Transverse colon (tissue), 4 donors: ENCODE measurements at regions of chrX and their contacts with region 1.

Region 1: DNA sequence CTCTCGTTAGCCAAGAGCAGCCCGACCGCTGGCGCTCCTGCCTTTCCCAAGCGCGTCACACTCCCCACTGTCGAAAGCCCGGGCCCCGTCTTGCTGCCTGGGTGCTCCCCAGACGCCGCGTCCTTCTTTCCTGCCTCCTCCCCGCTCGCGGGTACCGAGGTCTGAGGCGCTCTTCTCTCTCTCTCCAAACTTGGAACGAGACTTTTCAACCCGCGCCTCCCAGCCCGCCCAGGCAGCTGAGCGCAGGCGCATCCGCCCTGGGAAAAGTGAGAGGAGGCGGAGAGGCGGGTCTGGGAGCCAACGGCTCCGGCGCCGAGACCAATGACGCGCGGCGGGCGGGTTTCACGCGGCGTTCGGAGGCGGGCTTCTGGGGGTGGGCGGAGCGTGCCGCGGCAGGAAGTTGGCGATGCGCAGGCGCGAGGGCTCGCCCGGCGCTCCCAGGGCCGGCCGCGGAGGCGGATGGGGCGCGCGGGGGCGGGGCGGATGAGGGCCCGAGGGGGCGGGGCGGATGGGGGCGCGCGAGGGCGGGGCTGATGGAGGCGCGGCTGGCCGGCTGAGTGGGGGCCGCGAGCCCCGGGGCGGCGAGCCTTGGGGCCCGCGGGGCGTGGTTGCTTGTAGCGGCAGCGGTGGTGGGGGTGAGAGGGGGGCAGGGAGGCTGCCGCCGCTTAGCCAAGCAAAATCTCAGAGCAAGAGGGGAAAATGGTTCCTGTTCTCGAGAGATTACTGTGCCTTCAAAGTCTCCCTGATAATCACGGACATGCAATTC is at the start of gene RBBP7:
- DNase-seq: peak; percentile 94
- H3K4me3 ChIP-seq: peak within 1 kb of the TSS; percentile 61 to 81 (median 70)
- H3K27ac ChIP-seq: peak within 1 kb of the TSS; percentile 93 to 97 (median 95)
- H3K4me1 ChIP-seq: peaks cover 10 to 31% (median 14%) of the 10 kb centered on the region in 4 donors
- H3K27me3 ChIP-seq: no peaks in the 10 kb centered on the region
- CTCF ChIP-seq: peak in 1 of 5 experiments; percentile 17
- EP300 ChIP-seq: no peak
- POLR2A ChIP-seq: peak; percentile 92
- total RNA-seq, gene RBBP7: 32.2 to 67.4 (median 55.2) TPM

Region 2: DNA sequence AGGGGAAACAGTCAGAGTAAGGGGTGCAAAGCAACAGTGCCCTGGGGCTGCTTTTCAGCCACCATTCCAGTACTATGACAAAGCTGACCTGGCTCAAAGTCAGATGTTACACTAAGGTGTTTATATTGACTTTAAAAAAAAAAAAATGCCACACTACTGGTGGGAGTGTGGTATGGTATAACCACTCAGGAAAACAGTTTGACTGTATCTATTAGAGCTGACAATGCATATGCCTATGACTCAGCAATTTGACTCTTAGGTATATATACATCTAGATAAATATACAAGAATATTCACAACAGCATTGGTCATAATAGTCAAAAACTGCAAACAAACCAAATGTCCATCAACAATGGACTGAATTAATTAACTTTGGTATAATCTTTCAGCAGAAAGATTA is 1615.4 kb before region 1 on chrX:
- in situ Hi-C with region 1: no loop called
- intact Hi-C with region 1: no loop called
- DNase-seq: no peak
- H3K4me3 ChIP-seq: no peak overlapping the region
- H3K27ac ChIP-seq: no peak overlapping the region
- H3K4me1 ChIP-seq: no peaks in the 10 kb centered on the region
- H3K27me3 ChIP-seq: no peaks in the 10 kb centered on the region
- CTCF ChIP-seq: no peak
- EP300 ChIP-seq: no peak
- POLR2A ChIP-seq: no peak

Region 3: DNA sequence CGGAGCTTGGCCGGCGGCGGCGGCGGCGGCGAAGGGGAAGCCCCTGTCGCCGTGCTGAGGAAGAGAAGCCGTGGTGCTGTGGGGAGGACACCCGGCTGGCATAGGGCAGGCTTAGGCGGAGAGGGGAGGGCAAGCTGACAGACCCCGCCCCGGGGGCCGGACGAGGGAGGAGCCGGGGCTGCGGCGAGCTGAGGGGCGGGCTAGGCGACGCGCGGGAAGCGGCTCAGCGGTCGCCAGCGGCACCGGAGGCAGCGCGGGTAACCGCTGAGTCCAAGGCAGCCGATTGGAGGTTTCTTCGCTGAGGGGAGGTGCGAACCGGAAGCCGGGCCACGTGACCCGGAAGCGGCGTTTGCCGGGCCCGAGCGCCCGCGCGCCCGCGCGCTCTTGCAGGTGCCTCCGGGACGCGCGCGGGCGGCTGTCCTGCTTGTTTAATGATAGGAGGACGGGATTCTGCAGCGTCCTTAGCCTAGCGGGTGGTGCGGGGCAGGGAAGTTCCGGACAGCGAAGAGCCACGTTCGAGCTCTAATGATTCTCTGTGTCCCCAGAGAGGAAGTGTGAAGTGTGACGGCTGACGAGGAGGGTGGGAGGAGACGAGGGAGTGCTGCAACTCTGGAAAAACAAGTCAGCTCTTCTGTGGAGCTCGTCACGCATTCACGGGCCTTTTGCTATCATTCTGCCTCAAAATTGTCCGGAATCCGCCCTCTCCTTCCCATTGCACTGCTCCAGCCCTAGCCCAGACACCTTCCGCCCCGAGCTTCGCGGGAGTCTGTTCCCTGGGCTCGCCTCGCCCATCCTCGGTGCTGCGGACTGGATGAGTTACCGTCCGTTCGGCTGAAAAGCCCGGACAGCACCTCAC is 1015.3 kb before region 1 on chrX and contains the start of gene AP1S2:
- in situ Hi-C with region 1: no loop called
- intact Hi-C with region 1: loop called (anchors 5 kb)
- DNase-seq: peak; percentile 97
- H3K4me3 ChIP-seq: peak within 1 kb of the TSS; percentile 36 to 84 (median 82)
- H3K27ac ChIP-seq: peak within 1 kb of the TSS; percentile 91 to 96 (median 92)
- H3K4me1 ChIP-seq: peaks cover 0 to 10% (median 2%) of the 10 kb centered on the region in 4 donors
- H3K27me3 ChIP-seq: no peaks in the 10 kb centered on the region
- CTCF ChIP-seq: no peak
- EP300 ChIP-seq: no peak
- POLR2A ChIP-seq: peak; percentile 69
- total RNA-seq, gene AP1S2: 26.2 to 27.6 (median 26.7) TPM

Region 4: DNA sequence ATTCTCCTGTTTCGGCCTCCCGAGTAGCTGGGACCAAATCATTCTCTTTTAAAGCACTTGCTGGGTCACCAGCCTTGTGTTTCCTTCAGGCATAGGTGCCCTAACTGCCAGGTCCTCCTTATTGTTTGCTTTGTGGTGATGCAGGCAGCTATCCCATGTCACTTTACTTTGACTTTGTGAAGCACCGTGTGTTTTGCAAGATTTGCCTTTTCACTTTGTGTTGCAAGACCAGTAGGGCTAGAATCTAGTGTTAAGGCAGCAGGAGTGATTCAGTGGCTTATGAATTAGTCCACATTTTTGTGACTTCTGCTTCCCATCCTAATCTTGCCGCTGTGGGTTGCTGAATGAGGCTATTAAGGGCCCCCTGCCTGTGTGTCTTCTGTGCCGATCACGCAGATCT is 130.7 kb before region 1 on chrX:
- in situ Hi-C with region 1: no loop called
- intact Hi-C with region 1: no loop called
- DNase-seq: no peak
- H3K4me3 ChIP-seq: no peak overlapping the region
- H3K27ac ChIP-seq: no peak overlapping the region
- H3K4me1 ChIP-seq: no peaks in the 10 kb centered on the region
- H3K27me3 ChIP-seq: no peaks in the 10 kb centered on the region
- CTCF ChIP-seq: no peak
- EP300 ChIP-seq: no peak
- POLR2A ChIP-seq: no peak

Region 5: GRCh38 chrX:16797358-16797757 is 72.9 kb before region 1 on chrX:
- in situ Hi-C with region 1: no loop called
- intact Hi-C with region 1: no loop called
- DNase-seq: no peak
- H3K4me3 ChIP-seq: no peak overlapping the region
- H3K27ac ChIP-seq: no peak overlapping the region
- H3K4me1 ChIP-seq: no peaks in the 10 kb centered on the region
- H3K27me3 ChIP-seq: no peaks in the 10 kb centered on the region
- CTCF ChIP-seq: no peak
- EP300 ChIP-seq: no peak
- POLR2A ChIP-seq: no peak